B cell (primary cell): ENCODE measurements at regions of chr1 and their contacts with region 1.

Region 1: DNA sequence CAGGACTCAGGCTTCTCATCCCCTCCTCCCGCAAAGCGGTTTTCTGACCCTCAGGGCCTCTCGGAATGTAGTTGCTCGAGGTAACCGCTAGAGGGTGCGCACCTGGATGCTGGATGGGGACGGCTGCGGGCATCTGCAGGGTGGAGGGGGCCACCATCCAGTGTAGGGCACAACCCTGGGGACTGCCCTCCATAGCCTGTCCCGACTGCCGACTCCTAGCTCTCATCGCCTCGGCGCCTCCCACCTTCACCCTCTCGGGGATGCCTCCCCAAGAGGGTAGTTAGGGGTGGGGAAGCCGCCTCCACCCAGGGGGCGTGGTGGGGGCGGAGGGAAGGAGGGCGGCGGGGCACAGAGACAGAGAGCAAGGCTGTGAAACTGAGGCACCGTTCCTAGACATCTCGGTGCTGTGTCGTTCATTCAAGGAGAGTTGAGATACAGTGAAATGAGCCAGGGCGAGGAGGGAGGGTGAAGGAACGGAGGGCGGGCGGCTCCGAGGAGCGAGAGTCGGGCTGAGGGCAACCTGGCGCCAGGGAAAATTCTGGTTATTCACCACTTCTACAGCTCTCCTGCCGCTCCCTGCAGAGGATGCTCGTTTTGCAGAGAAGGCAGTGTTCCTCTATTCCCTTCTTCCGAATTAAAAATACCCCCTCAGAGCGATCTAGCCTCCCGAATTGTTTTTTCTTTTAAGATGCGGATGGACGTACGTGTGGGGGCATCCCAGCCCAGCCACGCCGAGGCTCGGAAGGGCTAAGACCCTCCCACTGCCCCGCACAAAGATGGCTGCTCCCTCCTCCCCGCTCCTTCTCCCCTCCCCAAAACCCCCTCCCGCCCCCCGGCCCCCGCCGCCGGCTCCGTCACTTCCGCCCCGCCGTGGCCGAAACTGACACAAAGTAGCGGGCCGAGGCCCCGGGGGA is at the start of gene ATP8B2:
- DNase-seq: peak; percentile 89
- ATAC-seq: peak; percentile 68
- H3K4me3 ChIP-seq: peak within 1 kb of the TSS; percentile 57 to 90 (median 87)
- H3K4me3 Mint-ChIP-seq: peak within 1 kb of the TSS; percentile 93
- H3K27ac ChIP-seq: peak within 1 kb of the TSS; percentile 48 to 67
- H3K27ac Mint-ChIP-seq: peak within 1 kb of the TSS; percentile 89
- H3K4me1 ChIP-seq: peaks cover 30 to 46% of the 10 kb centered on the region in 2 donors
- H3K4me1 Mint-ChIP-seq: peaks cover 42% of the 10 kb centered on the region
- H3K27me3 ChIP-seq: peaks cover 0 to 18% (median 3%) of the 10 kb centered on the region in 4 experiments
- H3K27me3 Mint-ChIP-seq: peaks cover 15% of the 10 kb centered on the region
- CTCF ChIP-seq: peak; percentile 92
- total RNA-seq, gene ATP8B2: 31.1 and 32.4 TPM in 2 replicates

Region 2: DNA sequence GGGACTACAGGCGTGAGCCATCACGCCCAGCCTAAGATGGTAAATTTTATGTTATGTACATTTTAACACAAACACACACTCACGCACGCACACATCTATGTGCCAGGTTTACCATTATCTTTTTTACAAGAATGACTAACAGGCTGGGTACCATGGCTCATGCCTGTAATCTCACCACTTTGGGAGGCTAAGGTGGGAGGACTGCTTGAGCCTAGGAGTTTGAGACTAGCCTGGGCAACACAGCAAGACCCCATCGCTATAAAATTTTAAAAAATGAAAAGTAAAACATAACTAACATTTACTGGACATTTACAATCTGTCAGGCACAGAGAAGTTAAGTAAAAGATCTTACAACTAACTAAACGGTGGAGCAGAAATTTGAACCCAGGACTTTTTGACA is 416.9 kb before region 1 on chr1:
- CTCF ChIA-PET with region 1: no interaction called
- POLR2A ChIA-PET with region 1: no interaction called
- intact Hi-C with region 1: no loop called
- DNase-seq: no peak
- ATAC-seq: no peak
- H3K4me3 ChIP-seq: no peak overlapping the region
- H3K4me3 Mint-ChIP-seq: no peak overlapping the region
- H3K27ac ChIP-seq: no peak overlapping the region
- H3K27ac Mint-ChIP-seq: no peak overlapping the region
- H3K4me1 ChIP-seq: peaks cover 0 to 10% of the 10 kb centered on the region in 2 donors
- H3K4me1 Mint-ChIP-seq: peaks cover 17% of the 10 kb centered on the region
- H3K27me3 ChIP-seq: no peaks in the 10 kb centered on the region
- H3K27me3 Mint-ChIP-seq: no peaks in the 10 kb centered on the region
- CTCF ChIP-seq: no peak

Region 3: DNA sequence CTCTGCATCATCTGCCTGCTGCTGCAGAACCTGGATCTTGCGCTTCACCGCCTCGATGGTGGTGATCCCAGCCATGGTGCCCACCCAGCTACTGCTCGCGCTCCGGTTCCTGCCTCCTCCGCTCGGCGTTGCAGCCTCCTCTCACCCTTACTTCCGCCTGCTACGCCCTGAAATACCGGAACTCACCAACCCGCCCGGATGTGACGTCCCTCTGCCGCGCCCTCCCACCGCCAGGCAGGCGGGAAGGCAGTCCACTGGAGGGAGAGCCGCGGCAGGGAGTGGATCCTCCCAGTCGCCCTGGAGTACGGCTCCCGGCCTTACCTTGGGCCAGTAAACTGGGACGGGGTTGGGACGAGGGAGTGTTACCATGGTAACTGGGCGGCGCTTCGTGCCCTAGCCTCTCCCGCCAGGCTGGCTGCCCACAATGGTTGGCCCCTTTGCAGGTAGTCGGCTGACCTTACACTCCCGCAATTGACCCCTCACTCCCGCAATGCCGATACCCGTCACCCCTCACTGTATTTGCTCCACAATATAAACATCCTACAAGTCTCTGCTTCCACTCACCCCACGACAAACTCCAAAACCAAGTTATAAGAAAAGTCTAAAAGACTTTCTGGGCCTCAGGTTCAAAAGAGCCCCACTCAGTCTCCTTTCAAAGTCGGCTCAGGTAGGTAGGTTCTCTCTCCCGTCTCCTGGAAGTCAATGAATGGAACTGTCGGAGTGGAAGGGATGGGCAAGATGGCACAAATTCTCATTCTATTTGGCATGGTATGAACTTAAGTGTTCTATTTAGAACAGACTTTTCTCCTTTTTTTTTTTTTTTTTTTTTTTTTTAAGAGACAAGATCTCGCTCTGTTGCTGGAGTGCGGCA is 141.6 kb before region 1 on chr1:
- CTCF ChIA-PET with region 1: no interaction called
- POLR2A ChIA-PET with region 1: no interaction called
- intact Hi-C with region 1: loop called (anchors 5 kb)
- DNase-seq: peak; percentile 94
- ATAC-seq: peak; percentile 73
- H3K4me3 ChIP-seq: peak overlapping the region; percentile 54 to 99 (median 98)
- H3K4me3 Mint-ChIP-seq: peak overlapping the region; percentile 91
- H3K27ac ChIP-seq: peak overlapping the region; percentile 91 to 96
- H3K27ac Mint-ChIP-seq: peak overlapping the region; percentile 98
- H3K4me1 ChIP-seq: peaks cover 39 to 46% of the 10 kb centered on the region in 2 donors
- H3K4me1 Mint-ChIP-seq: peaks cover 48% of the 10 kb centered on the region
- H3K27me3 ChIP-seq: no peaks in the 10 kb centered on the region
- H3K27me3 Mint-ChIP-seq: peaks cover 4% of the 10 kb centered on the region
- CTCF ChIP-seq: no peak

Region 4: GRCh38 chr1:154220071-154220969 is 104.6 kb before region 1 on chr1 and contains the start of gene UBAP2L:
- CTCF ChIA-PET with region 1: no interaction called
- POLR2A ChIA-PET with region 1: interaction called, 3 read pairs
- intact Hi-C with region 1: loop called (anchors 1 kb)
- DNase-seq: peak; percentile 100
- ATAC-seq: peak; percentile 83
- H3K4me3 ChIP-seq: peak within 1 kb of the TSS; percentile 92 to 99 (median 95)
- H3K4me3 Mint-ChIP-seq: peak within 1 kb of the TSS; percentile 97
- H3K27ac ChIP-seq: peak within 1 kb of the TSS; percentile 98 to 100
- H3K27ac Mint-ChIP-seq: peak within 1 kb of the TSS; percentile 97
- H3K4me1 ChIP-seq: peaks cover 34 to 39% of the 10 kb centered on the region in 2 donors
- H3K4me1 Mint-ChIP-seq: peaks cover 66% of the 10 kb centered on the region
- H3K27me3 ChIP-seq: no peaks in the 10 kb centered on the region
- H3K27me3 Mint-ChIP-seq: no peaks in the 10 kb centered on the region
- CTCF ChIP-seq: no peak
- total RNA-seq, gene UBAP2L: 218 and 219 TPM in 2 replicates

Region 5: DNA sequence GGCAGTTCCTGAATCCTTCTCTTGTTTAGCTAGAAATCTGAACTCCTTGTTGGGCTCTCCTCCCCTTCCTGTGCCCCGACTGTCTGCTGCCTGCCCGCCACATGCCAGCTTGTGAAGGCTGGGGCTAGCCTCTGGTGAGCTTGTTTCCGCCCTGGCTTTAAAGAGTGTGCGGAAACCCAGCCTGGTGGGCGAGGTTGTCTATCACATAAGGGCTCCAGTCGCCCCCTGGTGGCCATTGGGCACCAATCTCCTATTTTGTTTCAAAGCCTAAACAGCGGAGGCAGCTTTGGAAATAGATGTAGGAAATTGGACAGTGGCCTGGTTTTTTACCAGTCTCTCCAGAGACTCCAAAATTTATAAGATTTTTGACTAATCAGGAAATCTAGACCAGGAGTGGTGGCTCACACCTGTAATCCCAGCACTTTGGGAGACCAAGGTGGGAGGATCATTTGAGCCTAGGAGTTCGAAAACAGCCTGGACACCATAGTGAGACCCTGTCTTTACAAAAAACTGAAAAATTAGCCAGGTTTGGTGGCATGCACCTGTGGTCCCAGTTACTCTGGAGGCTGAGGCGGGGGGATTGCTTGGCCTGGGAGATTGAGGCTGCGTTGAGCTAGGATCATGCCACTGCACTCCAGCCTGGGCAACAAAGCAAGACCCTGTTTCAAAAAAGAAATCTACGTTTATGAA is 10.2 kb after region 1 on chr1:
- CTCF ChIA-PET with region 1: interaction called, 148 read pairs
- POLR2A ChIA-PET with region 1: interaction called, 13 read pairs
- intact Hi-C with region 1: loop called (anchors 1 kb)
- DNase-seq: peak; percentile 89
- ATAC-seq: peak; percentile 89
- H3K4me3 ChIP-seq: no peak overlapping the region
- H3K4me3 Mint-ChIP-seq: no peak overlapping the region
- H3K27ac ChIP-seq: no peak overlapping the region
- H3K27ac Mint-ChIP-seq: peak overlapping the region; percentile 86
- H3K4me1 ChIP-seq: peaks cover 10 to 17% of the 10 kb centered on the region in 2 donors
- H3K4me1 Mint-ChIP-seq: peaks cover 13% of the 10 kb centered on the region
- H3K27me3 ChIP-seq: no peaks in the 10 kb centered on the region
- H3K27me3 Mint-ChIP-seq: no peaks in the 10 kb centered on the region
- CTCF ChIP-seq: peak; percentile 91

Region 6: GRCh38 chr1:154404984-154405761 is 80.2 kb after region 1 on chr1 and contains the start of gene IL6R:
- CTCF ChIA-PET with region 1: no interaction called
- POLR2A ChIA-PET with region 1: no interaction called
- intact Hi-C with region 1: loop called (anchors 10 kb)
- DNase-seq: peak; percentile 86
- ATAC-seq: peak; percentile 59
- H3K4me3 ChIP-seq: peak within 1 kb of the TSS; percentile 32 to 65 (median 61)
- H3K4me3 Mint-ChIP-seq: peak within 1 kb of the TSS; percentile 87
- H3K27ac ChIP-seq: peak within 1 kb of the TSS in 1 of 2 donors; percentile 35
- H3K27ac Mint-ChIP-seq: peak within 1 kb of the TSS; percentile 74
- H3K4me1 ChIP-seq: peaks cover 47 to 71% of the 10 kb centered on the region in 2 donors
- H3K4me1 Mint-ChIP-seq: peaks cover 56% of the 10 kb centered on the region
- H3K27me3 ChIP-seq: peaks cover 0 to 16% (median 3%) of the 10 kb centered on the region in 4 experiments
- H3K27me3 Mint-ChIP-seq: no peaks in the 10 kb centered on the region
- CTCF ChIP-seq: peak; percentile 13
- total RNA-seq, gene IL6R: 5.3 TPM in 2 replicates

Region 7: GRCh38 chr1:154453574-154454352 is 128.8 kb after region 1 on chr1:
- CTCF ChIA-PET with region 1: no interaction called
- POLR2A ChIA-PET with region 1: no interaction called
- intact Hi-C with region 1: no loop called
- DNase-seq: no peak
- ATAC-seq: no peak
- H3K4me3 ChIP-seq: no peak overlapping the region
- H3K4me3 Mint-ChIP-seq: no peak overlapping the region
- H3K27ac ChIP-seq: no peak overlapping the region
- H3K27ac Mint-ChIP-seq: no peak overlapping the region
- H3K4me1 ChIP-seq: no peaks in the 10 kb centered on the region
- H3K4me1 Mint-ChIP-seq: no peaks in the 10 kb centered on the region
- H3K27me3 ChIP-seq: no peaks in the 10 kb centered on the region
- H3K27me3 Mint-ChIP-seq: no peaks in the 10 kb centered on the region
- CTCF ChIP-seq: no peak

Region 8: DNA sequence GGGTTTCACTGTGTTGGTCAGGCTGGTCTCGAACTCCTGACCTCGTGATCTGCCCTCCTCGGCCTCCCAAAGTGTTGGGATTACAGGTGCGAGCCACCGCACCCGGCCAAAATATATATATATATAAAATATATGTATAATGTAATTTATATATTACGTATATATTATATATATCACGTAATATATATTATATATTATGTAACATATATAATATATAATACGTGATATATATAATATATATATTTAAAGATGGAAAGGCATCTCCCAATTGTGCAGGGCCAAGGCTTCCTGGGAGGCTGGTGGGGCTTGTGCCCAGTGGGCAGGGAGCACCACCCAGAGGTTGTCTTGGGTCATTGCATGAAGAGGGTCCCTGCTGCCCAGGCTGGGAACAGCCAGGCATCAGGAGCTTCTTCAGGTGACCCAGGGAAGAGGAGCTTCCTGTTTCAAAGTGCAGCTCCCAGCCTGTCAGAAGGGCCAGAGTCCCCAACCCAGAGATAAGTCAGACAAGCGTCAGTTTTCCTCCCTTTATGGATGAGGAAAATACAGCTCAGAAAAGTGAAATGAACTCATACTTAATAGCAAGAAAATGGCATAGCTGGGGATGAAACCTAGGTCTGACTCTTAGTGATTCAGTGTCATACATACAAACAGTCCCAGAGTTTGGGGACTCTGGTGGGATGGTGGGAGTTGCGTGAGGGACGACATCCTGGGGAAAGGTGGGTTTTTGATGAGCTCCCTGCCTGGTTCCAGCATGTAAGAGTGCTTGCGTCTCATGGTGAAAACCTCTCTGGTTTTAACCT is 221.5 kb after region 1 on chr1:
- CTCF ChIA-PET with region 1: interaction called, 4 read pairs
- POLR2A ChIA-PET with region 1: no interaction called
- intact Hi-C with region 1: loop called (anchors 5 kb)
- DNase-seq: peak; percentile 69
- ATAC-seq: peak; percentile 86
- H3K4me3 ChIP-seq: no peak overlapping the region
- H3K4me3 Mint-ChIP-seq: no peak overlapping the region
- H3K27ac ChIP-seq: no peak overlapping the region
- H3K27ac Mint-ChIP-seq: no peak overlapping the region
- H3K4me1 ChIP-seq: no peaks in the 10 kb centered on the region
- H3K4me1 Mint-ChIP-seq: peaks cover 5% of the 10 kb centered on the region
- H3K27me3 ChIP-seq: peaks cover 0 to 4% (median 0%) of the 10 kb centered on the region in 4 experiments
- H3K27me3 Mint-ChIP-seq: peaks cover 15% of the 10 kb centered on the region
- CTCF ChIP-seq: peak; percentile 83

Region 9: GRCh38 chr1:156282479-156283222 is 1957.7 kb after region 1 on chr1 and contains the start of gene SMG5:
- CTCF ChIA-PET with region 1: no interaction called
- POLR2A ChIA-PET with region 1: no interaction called
- intact Hi-C with region 1: loop called (anchors 5 kb)
- DNase-seq: peak; percentile 98
- ATAC-seq: peak; percentile 93
- H3K4me3 ChIP-seq: peak within 1 kb of the TSS; percentile 74 to 99 (median 86)
- H3K4me3 Mint-ChIP-seq: peak within 1 kb of the TSS; percentile 98
- H3K27ac ChIP-seq: peak within 1 kb of the TSS; percentile 79 to 89
- H3K27ac Mint-ChIP-seq: peak within 1 kb of the TSS; percentile 98
- H3K4me1 ChIP-seq: peaks cover 20 to 28% of the 10 kb centered on the region in 2 donors
- H3K4me1 Mint-ChIP-seq: peaks cover 39% of the 10 kb centered on the region
- H3K27me3 ChIP-seq: no peaks in the 10 kb centered on the region
- H3K27me3 Mint-ChIP-seq: no peaks in the 10 kb centered on the region
- CTCF ChIP-seq: no peak
- total RNA-seq, gene SMG5: 74.0 and 77.0 TPM in 2 replicates